ENCODE measurements at regions of chr14 and their contacts with region 1.

Region 1: GRCh38 chr14:23269193-23269592 is 16.7 kb downstream of the HOMEZ start:
- DNase-seq: no peak
- H3K4me3 ChIP-seq: no peak overlapping the region
- H3K27ac ChIP-seq: no peak overlapping the region
- H3K4me1 ChIP-seq: no peaks in the 10 kb centered on the region
- H3K27me3 ChIP-seq: no peaks in the 10 kb centered on the region
- CTCF ChIP-seq: no peak

Region 2: DNA sequence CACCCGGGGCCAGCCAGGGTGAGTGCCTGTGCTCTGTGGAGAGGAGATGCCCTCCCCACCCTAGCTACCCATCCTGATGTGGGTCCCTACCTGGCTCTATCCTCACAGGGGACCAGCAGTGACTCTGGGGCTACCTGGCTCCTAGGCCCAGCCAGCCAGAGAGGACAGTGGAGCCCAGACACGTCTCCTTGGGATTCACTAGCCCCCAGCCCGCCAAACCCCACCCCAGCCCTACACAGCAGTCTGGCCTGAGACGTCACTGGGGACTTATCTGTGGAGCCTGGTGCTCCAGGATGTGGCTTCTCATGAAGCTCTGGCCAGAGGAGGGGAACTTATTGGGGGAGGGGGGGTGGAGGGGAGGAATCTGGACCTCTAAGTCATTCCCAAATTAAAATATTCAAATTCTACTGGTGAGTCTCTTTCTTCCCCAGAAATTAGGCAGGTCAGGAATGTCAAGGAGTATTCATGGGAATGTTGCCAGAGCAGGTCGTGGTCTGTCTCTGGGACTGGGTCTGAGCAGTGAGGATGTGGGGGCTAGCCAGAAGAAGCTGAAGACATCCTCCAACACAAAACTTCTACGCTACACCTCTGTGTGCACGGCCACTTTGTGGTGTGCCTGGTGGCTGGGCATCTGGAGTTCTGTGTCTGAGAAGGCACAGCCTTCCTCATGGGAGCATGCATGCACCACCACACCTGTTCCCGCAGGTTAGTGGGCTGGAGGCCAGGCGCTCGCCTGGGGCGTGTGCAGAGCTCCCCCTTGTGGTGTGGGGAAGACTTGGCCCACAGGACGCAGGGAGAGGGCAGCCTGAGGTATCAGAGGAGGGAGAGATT is 110.4 kb after region 1 on chr14:
- CTCF ChIA-PET with region 1: no interaction called
- POLR2A ChIA-PET with region 1: no interaction called
- intact Hi-C with region 1: loop called (anchors 5 kb)
- DNase-seq: peak; percentile 50
- H3K4me3 ChIP-seq: no peak overlapping the region
- H3K27ac ChIP-seq: no peak overlapping the region
- H3K4me1 ChIP-seq: peaks cover 8% of the 10 kb centered on the region
- H3K27me3 ChIP-seq: no peaks in the 10 kb centered on the region
- CTCF ChIP-seq: peak; percentile 97

Region 3: GRCh38 chr14:23469127-23469905 is 200.1 kb after region 1 on chr14 and contains the start of gene NGDN:
- CTCF ChIA-PET with region 1: no interaction called
- POLR2A ChIA-PET with region 1: no interaction called
- intact Hi-C with region 1: loop called (anchors 10 kb)
- DNase-seq: peak; percentile 100
- H3K4me3 ChIP-seq: peak within 1 kb of the TSS; percentile 79
- H3K27ac ChIP-seq: peak within 1 kb of the TSS; percentile 80
- H3K4me1 ChIP-seq: peaks cover 5% of the 10 kb centered on the region
- H3K27me3 ChIP-seq: no peaks in the 10 kb centered on the region
- CTCF ChIP-seq: peak; percentile 87
- total RNA-seq, gene NGDN: 59.9 and 71.2 TPM in 2 replicates

Region 4: DNA sequence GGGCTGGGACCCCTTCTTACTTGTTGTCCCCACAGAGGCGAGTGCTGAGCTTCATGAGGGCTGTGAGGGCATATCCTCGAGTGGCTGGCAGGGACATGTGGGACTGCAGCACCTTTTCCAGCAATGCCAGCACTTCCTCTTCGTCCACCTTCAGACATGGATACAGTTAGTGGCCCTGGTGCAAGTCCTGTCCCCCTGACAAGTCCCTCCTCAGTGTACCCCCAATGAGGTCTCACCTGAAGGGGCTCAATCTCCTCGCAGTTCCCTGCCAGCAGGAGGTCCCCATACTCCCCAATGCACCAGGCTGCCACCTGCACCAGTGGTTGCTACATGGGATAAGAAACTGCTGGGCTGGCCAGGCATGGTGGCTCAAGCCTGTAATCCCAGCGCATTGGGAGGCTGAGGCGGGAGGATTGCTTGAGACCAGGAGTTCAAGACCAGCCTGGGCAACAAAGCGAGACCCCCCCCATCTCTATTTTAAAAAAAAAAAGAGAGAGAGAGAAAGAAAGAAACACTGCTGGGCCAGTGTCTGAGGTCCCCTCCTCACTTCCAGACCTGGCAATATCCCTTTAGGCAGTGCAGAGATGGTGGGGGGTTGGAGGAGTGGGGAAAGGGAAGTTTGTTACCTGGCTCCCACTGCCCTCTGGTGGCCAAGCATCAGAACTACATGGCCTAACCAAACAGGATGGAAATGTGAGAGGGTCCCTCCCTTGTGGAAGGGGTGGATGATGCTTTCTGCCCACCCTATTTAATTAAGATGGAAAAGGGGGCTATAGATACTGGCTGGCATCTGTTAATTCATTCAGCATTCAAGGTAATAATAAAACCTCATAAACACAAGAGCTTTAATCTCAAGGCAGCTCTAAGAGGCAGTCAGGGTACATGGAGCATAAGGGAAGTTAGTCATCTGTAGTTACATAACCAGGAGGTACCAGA is 293.3 kb after region 1 on chr14:
- CTCF ChIA-PET with region 1: no interaction called
- POLR2A ChIA-PET with region 1: no interaction called
- intact Hi-C with region 1: loop called (anchors 1 kb)
- DNase-seq: peak; percentile 75
- H3K4me3 ChIP-seq: no peak overlapping the region
- H3K27ac ChIP-seq: no peak overlapping the region
- H3K4me1 ChIP-seq: peaks cover 3% of the 10 kb centered on the region
- H3K27me3 ChIP-seq: no peaks in the 10 kb centered on the region
- CTCF ChIP-seq: peak; percentile 87